Activated CD4-positive, alpha-beta memory T cell treated with anti-CD3 and anti-CD28 coated beads for 36 hours (primary cell): ENCODE measurements at regions of chr6 and their contacts with region 1.

Region 1: GRCh38 chr6:151675746-151676416 is 131.6 kb upstream of the ESR1 start:
- DNase-seq: peak; percentile 65
- H3K4me3 Mint-ChIP-seq: no peak overlapping the region
- H3K27ac Mint-ChIP-seq: no peak overlapping the region
- H3K4me1 Mint-ChIP-seq: peaks cover 10% of the 10 kb centered on the region
- H3K27me3 Mint-ChIP-seq: peaks cover 4% of the 10 kb centered on the region

Region 2: DNA sequence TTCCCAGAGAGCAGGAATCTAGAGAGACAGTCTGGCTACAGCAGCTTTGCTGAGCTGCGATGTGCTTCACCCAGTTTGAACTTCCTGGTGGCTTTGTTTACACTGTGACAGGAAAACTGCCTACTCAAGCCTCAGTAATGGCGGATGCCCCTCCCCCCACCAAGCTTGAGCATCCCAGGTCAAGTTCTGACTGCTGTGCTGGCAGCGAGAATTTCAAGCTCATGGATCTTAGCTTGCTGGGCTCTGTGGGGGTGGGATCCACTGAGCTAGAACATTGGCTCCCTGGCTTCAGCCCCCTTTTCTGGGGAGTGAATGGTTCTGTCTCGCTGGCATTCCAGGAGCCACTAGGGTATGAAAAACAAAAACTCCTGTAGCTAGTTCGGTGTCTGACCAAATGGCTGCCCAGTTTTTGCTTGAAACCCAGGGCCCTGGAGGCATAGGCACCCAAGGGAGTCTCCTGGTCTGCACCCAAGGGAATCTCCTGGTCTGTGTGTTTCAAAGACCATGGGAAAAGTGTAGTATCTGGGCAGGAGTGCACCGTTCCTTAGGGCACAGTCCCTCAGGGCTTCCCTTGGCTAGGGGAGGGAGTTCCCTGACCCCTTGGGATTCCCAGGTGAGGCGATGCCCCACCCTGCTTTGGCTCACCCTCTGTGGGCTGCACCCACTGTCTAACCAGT is 40.8 kb after region 1 on chr6:
- CTCF ChIA-PET with region 1: no interaction called
- POLR2A ChIA-PET with region 1: no interaction called
- intact Hi-C with region 1: no loop called
- DNase-seq: peak; percentile 50
- H3K4me3 Mint-ChIP-seq: no peak overlapping the region
- H3K27ac Mint-ChIP-seq: no peak overlapping the region
- H3K4me1 Mint-ChIP-seq: peaks cover 22% of the 10 kb centered on the region
- H3K27me3 Mint-ChIP-seq: peaks cover 2% of the 10 kb centered on the region

Region 3: DNA sequence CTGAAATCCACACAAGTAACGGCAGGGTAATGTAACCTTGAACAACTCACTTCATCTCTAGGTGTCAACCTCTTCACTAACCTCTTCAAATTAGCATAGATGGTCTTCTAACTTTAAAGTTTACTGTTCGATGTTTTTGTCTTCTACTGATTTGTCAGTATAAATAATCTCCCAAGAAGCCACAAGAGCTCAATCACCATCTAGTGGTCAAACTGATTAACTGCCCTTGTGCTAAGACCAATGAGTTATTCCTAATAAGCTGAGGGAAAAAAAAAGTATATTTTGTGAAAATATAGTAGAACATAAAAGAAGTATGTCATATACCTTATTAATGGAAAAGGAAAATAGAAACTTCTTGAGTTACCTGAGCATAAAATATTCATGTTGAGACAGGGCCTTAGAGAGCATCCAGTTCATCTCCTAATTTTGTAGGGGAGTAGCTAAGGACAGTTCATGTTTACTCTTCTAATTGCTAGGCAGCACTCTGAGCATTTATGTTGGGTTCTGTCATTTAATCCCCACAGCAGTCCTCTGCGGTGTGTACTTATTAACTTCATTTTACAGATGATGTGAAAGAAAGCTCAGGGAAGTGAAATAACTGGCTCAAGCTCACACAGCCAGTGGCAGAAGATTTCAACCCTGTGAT is 448.7 kb after region 1 on chr6:
- CTCF ChIA-PET with region 1: interaction called, 39 read pairs
- POLR2A ChIA-PET with region 1: no interaction called
- intact Hi-C with region 1: loop called (anchors 1 kb)
- DNase-seq: no peak
- H3K4me3 Mint-ChIP-seq: no peak overlapping the region
- H3K27ac Mint-ChIP-seq: no peak overlapping the region
- H3K4me1 Mint-ChIP-seq: no peaks in the 10 kb centered on the region
- H3K27me3 Mint-ChIP-seq: no peaks in the 10 kb centered on the region

Region 4: GRCh38 chr6:152267967-152268845 is 592.3 kb after region 1 on chr6:
- CTCF ChIA-PET with region 1: interaction called, 11 read pairs
- POLR2A ChIA-PET with region 1: no interaction called
- intact Hi-C with region 1: loop called (anchors 1 kb)
- DNase-seq: no peak
- H3K4me3 Mint-ChIP-seq: no peak overlapping the region
- H3K27ac Mint-ChIP-seq: no peak overlapping the region
- H3K4me1 Mint-ChIP-seq: peaks cover 16% of the 10 kb centered on the region
- H3K27me3 Mint-ChIP-seq: no peaks in the 10 kb centered on the region